ENCODE measurements at regions of chr3 and their contacts with region 1.

Region 1: DNA sequence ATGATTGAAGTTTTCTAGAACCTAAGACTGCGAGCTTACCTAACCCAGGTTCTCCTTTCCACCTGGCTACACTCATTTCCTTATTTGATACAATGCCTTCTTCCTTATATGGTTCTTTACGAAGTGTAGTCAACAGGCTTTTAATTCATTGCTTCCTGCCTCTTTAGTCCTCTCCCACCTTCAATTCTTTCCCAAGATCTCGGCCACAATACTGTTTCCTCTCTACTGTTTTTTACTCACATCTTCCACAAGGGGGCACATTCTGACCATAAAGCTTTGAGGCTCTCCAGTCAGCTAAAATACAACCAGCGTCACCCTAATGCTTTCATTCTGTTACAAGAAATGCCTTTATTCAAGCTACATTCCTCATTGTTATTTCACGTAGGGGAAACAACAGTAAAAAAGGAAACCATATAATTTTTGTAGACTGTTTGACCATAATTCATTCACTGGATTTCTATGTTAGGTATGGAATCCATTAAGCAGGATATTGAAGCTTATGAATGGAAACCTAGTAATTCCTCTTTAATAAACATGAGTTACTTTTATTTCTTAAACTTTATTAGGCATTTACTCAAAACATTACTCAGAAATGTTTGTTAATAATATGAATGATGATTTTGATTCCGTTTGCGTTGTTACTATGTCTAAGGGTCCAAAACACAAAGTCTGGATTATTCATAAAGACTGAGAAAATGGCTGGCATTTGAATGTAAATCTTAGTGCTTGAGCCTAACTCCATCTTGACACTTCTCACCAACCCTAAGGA is 29.5 kb upstream of the VEPH1 start:
- DNase-seq: peak; percentile 68
- H3K4me3 ChIP-seq: no peak overlapping the region
- H3K27ac ChIP-seq: no peak overlapping the region
- H3K4me1 ChIP-seq: no peaks in the 10 kb centered on the region
- H3K27me3 ChIP-seq: no peaks in the 10 kb centered on the region
- CTCF ChIP-seq: peak; percentile 70 to 79

Region 2: GRCh38 chr3:155554777-155555451 is 1977.8 kb before region 1 on chr3:
- CTCF ChIA-PET with region 1: interaction called, 25 read pairs
- dilution Hi-C with region 1: no loop called
- in situ Hi-C with region 1: no loop called
- intact Hi-C with region 1: no loop called
- DNase-seq: peak; percentile 65
- H3K4me3 ChIP-seq: peak overlapping the region in 2 of 3 experiments; percentile 8 to 17
- H3K27ac ChIP-seq: peak overlapping the region; percentile 65
- H3K4me1 ChIP-seq: peaks cover 24% of the 10 kb centered on the region
- H3K27me3 ChIP-seq: no peaks in the 10 kb centered on the region
- CTCF ChIP-seq: no peak

Region 3: GRCh38 chr3:156674046-156674910 is 858.4 kb before region 1 on chr3 and contains the start of gene TIPARP:
- CTCF ChIA-PET with region 1: no interaction called
- dilution Hi-C with region 1: no loop called
- in situ Hi-C with region 1: no loop called
- intact Hi-C with region 1: no loop called
- DNase-seq: peak; percentile 98
- H3K4me3 ChIP-seq: peak within 1 kb of the TSS; percentile 61 to 94 (median 76)
- H3K27ac ChIP-seq: peak within 1 kb of the TSS; percentile 99
- H3K4me1 ChIP-seq: peaks cover 22% of the 10 kb centered on the region
- H3K27me3 ChIP-seq: no peaks in the 10 kb centered on the region
- CTCF ChIP-seq: peak; percentile 5 to 44
- total RNA-seq, gene TIPARP: 171 to 229 TPM

Region 4: GRCh38 chr3:157447026-157447694 is 85.6 kb before region 1 on chr3:
- CTCF ChIA-PET with region 1: no interaction called
- dilution Hi-C with region 1: no loop called
- in situ Hi-C with region 1: no loop called
- intact Hi-C with region 1: no loop called
- DNase-seq: peak; percentile 17
- H3K4me3 ChIP-seq: no peak overlapping the region
- H3K27ac ChIP-seq: no peak overlapping the region
- H3K4me1 ChIP-seq: no peaks in the 10 kb centered on the region
- H3K27me3 ChIP-seq: peaks cover 2% of the 10 kb centered on the region
- CTCF ChIP-seq: peak; percentile 48 to 70

Region 5: GRCh38 chr3:157572559-157573270 is 40.0 kb after region 1 on chr3:
- CTCF ChIA-PET with region 1: interaction called, 26 read pairs
- dilution Hi-C with region 1: no loop called
- in situ Hi-C with region 1: no loop called
- intact Hi-C with region 1: loop called (anchors 1 kb)
- DNase-seq: peak; percentile 32
- H3K4me3 ChIP-seq: no peak overlapping the region
- H3K27ac ChIP-seq: no peak overlapping the region
- H3K4me1 ChIP-seq: no peaks in the 10 kb centered on the region
- H3K27me3 ChIP-seq: no peaks in the 10 kb centered on the region
- CTCF ChIP-seq: peak; percentile 76 to 80

Measured in mammary epithelial cell (primary cell).